ENCODE measurements at regions of chr20 and their contacts with region 1.

Region 1: DNA sequence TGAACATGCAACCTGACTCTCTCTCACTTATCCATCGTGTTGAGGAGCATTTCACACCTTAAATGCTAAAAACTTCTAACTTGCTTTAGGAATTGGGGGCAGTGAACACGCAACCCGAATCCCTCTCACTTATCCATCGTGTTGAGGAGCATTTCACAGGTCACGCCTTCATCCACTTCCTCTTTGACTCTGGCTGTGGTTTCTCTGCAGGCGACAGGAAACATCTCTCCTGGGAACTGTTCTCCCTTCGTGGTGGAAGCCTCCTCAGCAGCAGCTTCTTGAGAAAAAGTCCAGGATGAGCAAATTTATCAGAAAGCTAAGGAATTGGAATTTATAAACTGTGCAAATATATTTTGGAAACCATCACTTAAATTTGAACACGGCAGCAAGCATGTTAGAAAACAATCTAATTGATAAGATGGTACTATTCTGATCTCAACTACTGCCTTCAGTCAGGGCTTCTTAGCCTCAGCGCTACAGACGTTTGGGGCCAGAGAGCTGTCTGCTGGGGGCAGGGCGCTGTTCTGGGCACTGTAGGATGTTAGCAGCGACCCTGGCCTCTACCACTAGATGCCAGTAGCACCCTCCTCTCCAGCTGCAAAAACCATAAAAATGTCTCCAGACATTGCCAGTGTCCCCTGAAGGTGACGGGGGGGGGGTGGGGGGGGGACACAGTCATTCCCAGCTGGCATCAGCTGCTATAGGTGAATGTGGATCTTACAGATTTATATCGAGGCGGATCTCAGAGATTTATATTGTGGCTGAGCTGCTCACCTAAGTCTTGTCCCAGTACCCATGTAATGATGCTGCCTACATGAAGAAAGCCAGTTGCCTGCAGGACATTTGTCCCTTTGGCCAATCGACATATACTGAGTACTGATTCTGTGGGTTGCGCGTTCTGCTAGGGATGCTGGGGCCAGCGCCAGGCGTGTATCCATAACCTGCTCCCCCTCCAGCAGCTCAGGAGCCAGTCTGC is 26.2 kb downstream of the CTCFL start:
- DNase-seq: peak; percentile 23

Region 2: GRCh38 chr20:57351042-57351783 is 147.5 kb before region 1 on chr20 and contains the start of gene RAE1:
- in situ Hi-C with region 1: loop called (anchors 10 kb)
- DNase-seq: peak; percentile 91
- total RNA-seq, gene RAE1: 77.4 and 81.3 TPM in 2 replicates

Region 3: DNA sequence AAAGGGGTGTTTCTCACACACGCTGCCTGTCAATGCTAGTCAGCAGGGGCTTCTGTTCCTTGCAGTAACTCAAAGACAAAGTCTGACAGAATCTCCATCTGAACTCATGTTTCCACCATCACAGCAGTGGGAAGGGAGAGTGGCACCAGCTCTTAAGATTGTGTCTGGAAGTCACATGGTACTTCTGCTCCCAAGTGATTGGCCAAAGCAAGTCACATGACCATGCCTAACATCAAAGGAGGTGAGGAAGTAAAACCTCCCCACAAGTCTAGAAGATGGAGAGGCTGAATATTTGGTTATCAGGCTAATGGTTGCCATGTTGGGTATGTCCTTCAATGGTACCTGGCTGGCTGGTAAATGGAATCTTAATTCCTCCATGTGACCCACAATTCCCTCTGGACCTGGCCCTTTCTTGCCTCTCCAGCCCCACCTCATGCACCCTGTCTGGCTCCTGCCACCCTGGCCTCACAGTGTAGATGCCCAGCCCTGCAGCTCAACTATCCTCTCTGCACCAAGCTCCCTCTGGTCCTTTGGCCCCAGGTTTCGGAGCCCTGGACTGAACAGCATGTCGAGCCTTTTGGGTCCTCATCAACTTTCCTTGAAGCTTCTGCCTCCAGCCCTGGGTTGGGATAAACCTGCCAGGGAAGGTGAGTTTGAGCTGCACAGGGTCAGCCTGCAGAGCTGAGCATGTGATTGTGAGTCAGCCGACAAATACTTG is 262.1 kb after region 1 on chr20:
- in situ Hi-C with region 1: no loop called
- DNase-seq: no peak